AG04449 (cell line): ENCODE measurements at regions of chr12 and their contacts with region 1.

Region 1: GRCh38 chr12:111788178-111788654 is 21.5 kb downstream of the ALDH2 start:
- DNase-seq: no peak
- H3K4me3 ChIP-seq: no peak overlapping the region
- CTCF ChIP-seq: peak; percentile 21

Region 2: DNA sequence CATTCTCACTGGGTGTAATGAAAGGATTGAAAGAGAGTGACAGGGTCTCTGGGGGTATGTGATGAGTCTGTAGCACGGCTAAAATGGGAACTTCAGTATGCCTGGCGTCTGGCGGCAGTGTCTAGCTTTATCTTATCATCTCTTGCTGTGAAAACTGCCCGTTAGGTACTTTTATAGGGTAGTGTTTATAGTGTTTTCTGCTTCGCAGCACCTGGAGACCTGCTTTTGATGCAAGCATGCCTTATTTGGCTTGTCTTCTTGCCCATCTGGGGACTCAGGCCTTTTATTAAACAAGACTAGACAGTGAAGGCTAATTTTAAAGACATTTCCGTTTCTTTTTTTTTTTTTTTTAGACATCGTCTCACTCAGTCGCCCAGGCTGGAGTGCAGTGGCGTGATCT is 57.8 kb before region 1 on chr12:
- CTCF ChIA-PET with region 1: no interaction called
- POLR2A ChIA-PET with region 1: no interaction called
- DNase-seq: no peak
- H3K4me3 ChIP-seq: no peak overlapping the region
- CTCF ChIP-seq: no peak

Region 3: GRCh38 chr12:111753144-111753881 is 34.9 kb before region 1 on chr12:
- CTCF ChIA-PET with region 1: interaction called, 11 read pairs
- POLR2A ChIA-PET with region 1: no interaction called
- DNase-seq: no peak
- H3K4me3 ChIP-seq: no peak overlapping the region
- CTCF ChIP-seq: peak; percentile 84

Region 4: DNA sequence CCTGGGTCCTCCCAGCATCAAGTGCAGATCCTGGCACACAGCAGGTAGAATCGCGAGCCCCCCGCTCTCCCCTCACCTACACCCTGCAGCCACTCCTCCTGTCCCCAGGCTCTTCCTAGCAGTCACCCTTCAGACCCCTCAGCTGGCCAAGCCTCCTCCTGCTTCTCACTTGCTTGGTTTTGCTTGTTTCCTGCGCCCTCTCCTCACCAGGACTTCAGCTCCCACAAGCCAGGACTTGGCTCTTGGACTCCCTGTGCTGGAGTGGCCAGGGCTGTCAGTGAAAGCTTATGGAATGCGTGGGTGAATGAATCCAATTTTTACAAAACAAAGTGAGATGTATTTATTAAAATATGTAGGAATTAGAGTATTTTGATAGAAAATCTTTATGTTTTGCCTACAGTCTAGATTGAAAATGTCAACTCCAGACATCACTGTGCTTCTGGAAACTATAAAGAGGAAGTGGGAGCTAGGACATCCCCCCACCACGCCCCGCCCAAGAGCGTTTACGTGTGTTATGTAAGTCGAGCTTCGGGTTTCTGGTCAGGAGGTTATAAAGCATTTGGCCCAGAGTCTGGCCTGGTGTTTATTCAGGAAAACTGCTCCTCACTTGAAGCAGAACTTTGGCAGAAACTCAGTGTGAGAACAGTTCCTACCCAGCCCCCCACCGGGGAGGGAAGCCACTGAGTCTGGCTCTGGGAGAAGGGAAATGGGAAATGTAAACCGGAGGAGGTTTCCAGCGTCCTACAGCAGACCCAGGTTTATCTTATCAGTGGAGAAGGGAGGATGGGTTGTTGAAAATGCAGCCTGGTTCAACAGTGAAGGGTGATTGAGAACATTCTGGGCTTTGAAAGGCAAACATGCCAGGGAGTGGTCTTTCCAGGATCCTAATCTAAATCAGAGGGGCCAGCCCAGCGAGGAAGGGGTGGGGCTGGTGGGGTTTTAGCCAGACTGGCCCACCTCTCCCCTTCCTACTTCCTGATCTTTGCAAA is 12.7 kb before region 1 on chr12:
- CTCF ChIA-PET with region 1: interaction called, 10 read pairs
- POLR2A ChIA-PET with region 1: interaction called, 4 read pairs
- DNase-seq: no peak
- H3K4me3 ChIP-seq: no peak overlapping the region
- CTCF ChIP-seq: no peak